ENCODE measurements at regions of chr7 and their contacts with region 1.

Region 1: DNA sequence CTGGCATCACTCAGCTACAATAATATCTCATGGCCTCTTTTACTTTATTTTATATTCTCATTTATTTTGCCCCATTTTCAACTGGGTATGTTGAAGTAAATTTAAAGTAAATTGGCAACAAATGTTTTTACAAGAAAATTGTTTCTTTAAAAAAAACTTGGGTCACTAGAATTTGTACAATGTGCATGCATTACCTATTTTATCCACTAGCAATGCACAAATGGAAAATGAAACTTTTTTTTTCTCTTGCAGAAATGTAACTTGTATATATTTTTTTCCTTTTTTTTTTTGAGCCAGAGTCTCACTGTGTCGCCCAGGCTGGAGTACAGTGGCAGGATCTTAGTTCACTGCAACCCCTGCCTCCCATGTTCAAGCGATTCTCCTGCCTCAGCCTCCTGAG is 10.3 kb upstream of the H2AZ2 start:
- DNase-seq: no peak
- H3K4me3 ChIP-seq: no peak overlapping the region
- CTCF ChIP-seq: no peak

Region 2: GRCh38 chr7:44712012-44712411 is 146.1 kb before region 1 on chr7:
- CTCF ChIA-PET with region 1: no interaction called
- POLR2A ChIA-PET with region 1: no interaction called
- DNase-seq: no peak
- H3K4me3 ChIP-seq: no peak overlapping the region
- CTCF ChIP-seq: no peak

Region 3: DNA sequence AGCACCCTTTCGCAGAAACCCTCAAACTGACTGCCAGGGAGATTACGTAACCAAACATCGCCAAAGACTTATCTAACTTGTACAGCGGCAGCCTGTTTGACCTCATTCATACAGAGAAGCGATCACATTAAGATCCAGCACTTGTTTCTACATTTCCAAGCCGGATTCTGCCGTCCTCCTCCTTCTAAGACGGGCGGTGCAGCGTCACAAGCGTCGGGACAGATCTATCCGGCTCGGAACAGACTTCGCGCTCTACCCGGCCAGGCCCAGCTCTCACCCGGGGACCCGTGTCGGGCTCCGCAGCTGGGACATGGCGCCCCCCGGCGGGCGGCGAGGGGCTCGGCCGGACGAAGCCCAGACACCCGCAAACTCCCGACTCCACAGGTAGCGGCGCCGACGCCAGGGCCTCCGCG is 10.6 kb before region 1 on chr7:
- CTCF ChIA-PET with region 1: interaction called, 57 read pairs
- POLR2A ChIA-PET with region 1: no interaction called
- DNase-seq: no peak
- H3K4me3 ChIP-seq: peak overlapping the region; percentile 74
- CTCF ChIP-seq: peak; percentile 95

Region 4: DNA sequence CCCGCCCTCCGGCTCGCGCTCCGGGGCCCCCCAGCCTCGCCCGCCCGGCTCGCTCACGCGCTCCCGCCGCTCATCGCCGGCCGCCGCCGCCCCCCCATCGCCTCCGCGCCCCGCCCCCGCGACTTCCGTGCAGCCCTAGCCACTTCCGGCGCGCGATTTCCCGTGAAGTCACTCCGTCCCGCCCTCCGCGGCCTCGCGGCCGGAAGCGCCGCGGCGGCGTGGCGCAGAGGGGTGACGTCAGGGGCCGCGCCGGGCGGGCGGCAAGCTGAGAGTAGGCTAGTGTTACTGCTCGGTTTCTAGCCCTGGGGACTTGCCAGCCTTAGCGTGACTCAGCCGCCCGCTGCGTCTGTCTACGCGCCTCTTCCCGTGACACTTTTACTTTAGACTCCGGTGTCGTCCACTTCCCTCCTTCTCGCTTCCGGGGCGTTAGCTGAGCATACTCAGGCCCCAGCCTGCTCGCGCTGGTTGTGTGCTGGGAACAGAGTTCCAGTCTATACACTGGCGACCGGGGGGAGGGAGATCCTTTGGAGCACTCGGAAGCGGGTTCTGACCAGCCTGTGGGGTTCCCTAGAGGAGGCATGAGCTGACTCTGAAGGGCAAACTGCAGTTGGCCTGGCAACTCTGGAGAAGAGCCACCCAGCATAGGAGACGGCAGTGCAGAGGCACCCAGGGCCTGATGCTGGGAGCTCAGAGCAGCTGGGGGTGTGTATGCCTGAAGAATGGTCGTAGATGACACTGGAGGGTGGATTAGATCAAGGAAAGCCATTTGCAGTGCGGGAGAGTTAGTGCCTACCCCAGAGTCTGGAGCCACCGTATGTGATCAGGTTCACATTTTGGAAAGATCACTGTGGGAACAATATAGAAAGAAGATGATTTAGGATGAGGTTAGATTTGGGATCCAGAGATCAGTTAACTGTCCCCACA is 27.5 kb after region 1 on chr7 and contains the start of gene PURB:
- CTCF ChIA-PET with region 1: interaction called, 10 read pairs
- POLR2A ChIA-PET with region 1: interaction called, 4 read pairs
- DNase-seq: peak; percentile 79
- H3K4me3 ChIP-seq: peak within 1 kb of the TSS; percentile 87
- CTCF ChIP-seq: no peak

Region 5: DNA sequence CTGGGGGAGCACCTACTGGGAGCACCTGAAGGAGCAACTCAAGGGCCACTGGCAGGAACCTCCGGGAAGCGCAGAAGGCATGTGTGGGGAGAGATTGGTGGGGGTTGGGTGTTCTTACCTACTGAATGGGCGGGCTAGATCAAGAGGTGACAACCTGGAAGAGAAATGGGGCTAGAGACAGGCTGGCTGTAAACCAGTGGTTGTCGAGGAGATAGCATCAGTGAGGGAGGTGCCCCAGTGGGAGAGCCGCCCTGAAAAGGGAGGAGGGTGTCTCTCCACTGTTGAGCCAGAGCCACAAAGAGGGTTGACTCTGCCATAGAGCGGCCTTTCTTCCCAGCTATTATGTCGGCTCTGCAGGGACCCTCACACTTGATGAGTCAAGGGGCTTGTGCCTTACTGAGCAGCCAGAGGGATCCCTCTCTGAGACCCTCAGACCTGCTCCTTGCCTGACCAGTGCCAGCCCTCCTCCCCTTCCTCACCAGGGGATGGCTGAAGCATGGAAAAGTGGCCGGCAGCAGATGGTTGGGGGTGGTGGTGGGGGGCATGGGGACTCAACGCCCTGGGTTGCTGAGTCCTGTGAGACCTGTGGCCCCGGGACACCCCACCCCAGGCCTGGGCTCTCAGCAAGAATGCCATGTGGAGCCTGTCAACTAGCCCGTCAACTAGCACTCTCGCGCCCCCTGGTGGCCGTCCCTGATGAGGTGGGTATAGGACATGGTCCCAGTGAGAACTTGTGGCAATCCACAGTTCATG is 63.6 kb after region 1 on chr7:
- CTCF ChIA-PET with region 1: interaction called, 211 read pairs
- POLR2A ChIA-PET with region 1: no interaction called
- DNase-seq: no peak
- H3K4me3 ChIP-seq: no peak overlapping the region
- CTCF ChIP-seq: peak; percentile 92

Region 6: DNA sequence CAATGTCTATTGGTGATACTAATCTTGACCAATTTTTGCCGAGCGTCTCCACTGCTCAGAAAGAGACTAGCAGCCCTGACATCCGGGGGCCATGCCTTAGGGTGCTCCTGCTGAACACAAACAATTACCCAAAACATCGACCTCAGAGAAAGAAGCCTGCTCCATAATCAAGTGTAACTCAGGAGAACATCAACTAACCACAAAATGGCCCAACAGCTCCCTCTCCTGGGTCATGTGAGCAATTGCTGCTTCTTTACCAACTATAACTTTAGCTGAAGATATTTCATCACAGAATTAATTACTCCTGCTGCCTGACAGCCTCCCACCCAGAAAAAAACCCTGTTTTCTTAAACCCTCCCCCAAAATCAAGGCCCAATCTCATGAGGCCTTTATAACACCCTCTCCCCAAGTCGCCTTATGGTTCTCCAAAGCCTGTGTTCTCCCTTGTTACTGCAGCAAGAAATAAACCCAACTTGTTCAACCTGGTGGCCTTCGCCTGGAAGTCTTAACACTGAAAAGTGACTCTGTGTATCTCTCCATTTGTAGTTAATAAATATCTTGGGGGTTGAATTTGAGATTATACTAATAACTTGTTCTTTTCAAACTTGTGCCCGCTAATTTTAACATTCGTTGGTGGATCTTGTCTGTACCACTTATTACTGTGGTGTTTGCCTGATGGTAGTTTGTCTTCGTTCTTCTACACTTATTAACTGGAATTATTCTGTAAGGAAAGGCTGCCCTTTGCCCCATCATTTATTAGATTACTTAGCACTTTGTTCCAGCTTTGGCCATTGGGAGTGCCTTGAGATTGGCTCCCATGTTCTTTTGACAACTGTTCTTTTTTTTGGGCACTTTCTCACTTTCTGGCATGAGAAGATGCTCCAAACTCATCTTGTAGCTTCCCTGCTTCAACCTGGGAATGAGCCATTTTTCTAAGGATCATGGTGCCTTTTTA is 278.2 kb after region 1 on chr7:
- CTCF ChIA-PET with region 1: interaction called, 95 read pairs
- POLR2A ChIA-PET with region 1: no interaction called
- DNase-seq: no peak
- H3K4me3 ChIP-seq: no peak overlapping the region
- CTCF ChIP-seq: peak; percentile 71

Measured in AG04449 (cell line).